ENCODE measurements at regions of chr7 and their contacts with region 1.

Region 1: GRCh38 chr7:45136106-45137060 is 21.2 kb upstream of the RAMP3 start:
- DNase-seq: peak in 2 of 4 donors; percentile 63 to 80
- ATAC-seq: peak; percentile 94
- H3K4me3 ChIP-seq: no peak overlapping the region
- H3K27ac ChIP-seq: no peak overlapping the region
- H3K4me1 ChIP-seq: no peaks in the 10 kb centered on the region
- H3K27me3 ChIP-seq: peaks cover 0 to 7% of the 10 kb centered on the region in 2 donors
- CTCF ChIP-seq: peak; percentile 78

Region 2: DNA sequence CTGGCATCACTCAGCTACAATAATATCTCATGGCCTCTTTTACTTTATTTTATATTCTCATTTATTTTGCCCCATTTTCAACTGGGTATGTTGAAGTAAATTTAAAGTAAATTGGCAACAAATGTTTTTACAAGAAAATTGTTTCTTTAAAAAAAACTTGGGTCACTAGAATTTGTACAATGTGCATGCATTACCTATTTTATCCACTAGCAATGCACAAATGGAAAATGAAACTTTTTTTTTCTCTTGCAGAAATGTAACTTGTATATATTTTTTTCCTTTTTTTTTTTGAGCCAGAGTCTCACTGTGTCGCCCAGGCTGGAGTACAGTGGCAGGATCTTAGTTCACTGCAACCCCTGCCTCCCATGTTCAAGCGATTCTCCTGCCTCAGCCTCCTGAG is 278.2 kb before region 1 on chr7:
- intact Hi-C with region 1: loop called in 1 of 2 experiments (anchors 10 kb)
- DNase-seq: no peak
- ATAC-seq: no peak
- H3K4me3 ChIP-seq: no peak overlapping the region
- H3K27ac ChIP-seq: no peak overlapping the region
- H3K4me1 ChIP-seq: peaks cover 0 to 5% of the 10 kb centered on the region in 2 donors
- H3K27me3 ChIP-seq: no peaks in the 10 kb centered on the region
- CTCF ChIP-seq: no peak

Region 3: GRCh38 chr7:44962483-44963251 is 173.7 kb before region 1 on chr7:
- intact Hi-C with region 1: loop called in 1 of 2 experiments (anchors 10 kb)
- DNase-seq: peak in 3 of 4 donors; percentile 23 to 83 (median 52)
- ATAC-seq: peak; percentile 59
- H3K4me3 ChIP-seq: peak overlapping the region; percentile 0 to 3
- H3K27ac ChIP-seq: no peak overlapping the region
- H3K4me1 ChIP-seq: no peaks in the 10 kb centered on the region
- H3K27me3 ChIP-seq: peaks cover 0 to 22% of the 10 kb centered on the region in 2 donors
- CTCF ChIP-seq: no peak

Region 4: GRCh38 chr7:45052011-45052410 is 84.4 kb before region 1 on chr7:
- intact Hi-C with region 1: no loop called
- DNase-seq: peak in 2 of 4 donors; percentile 33 to 63
- ATAC-seq: peak; percentile 92
- H3K4me3 ChIP-seq: no peak overlapping the region
- H3K27ac ChIP-seq: no peak overlapping the region
- H3K4me1 ChIP-seq: no peaks in the 10 kb centered on the region
- H3K27me3 ChIP-seq: no peaks in the 10 kb centered on the region
- CTCF ChIP-seq: no peak

Region 5: GRCh38 chr7:45229156-45229920 is 93.0 kb after region 1 on chr7:
- intact Hi-C with region 1: no loop called
- DNase-seq: no peak
- ATAC-seq: no peak
- H3K4me3 ChIP-seq: no peak overlapping the region
- H3K27ac ChIP-seq: peak overlapping the region in 1 of 2 donors; percentile 55
- H3K4me1 ChIP-seq: peaks cover 0 to 6% of the 10 kb centered on the region in 2 donors
- H3K27me3 ChIP-seq: peaks cover 0 to 16% of the 10 kb centered on the region in 2 donors
- CTCF ChIP-seq: no peak

Region 6: GRCh38 chr7:45872116-45873034 is 736.0 kb after region 1 on chr7:
- intact Hi-C with region 1: no loop called
- DNase-seq: no peak
- ATAC-seq: peak; percentile 29
- H3K4me3 ChIP-seq: no peak overlapping the region
- H3K27ac ChIP-seq: no peak overlapping the region
- H3K4me1 ChIP-seq: no peaks in the 10 kb centered on the region
- H3K27me3 ChIP-seq: no peaks in the 10 kb centered on the region
- CTCF ChIP-seq: no peak